Natural killer cell (primary cell): ENCODE measurements at regions of chr19 and their contacts with region 1.

Region 1: GRCh38 chr19:18521885-18522624 is at the start of gene ELL:
- DNase-seq: peak; percentile 100
- ATAC-seq: peak; percentile 85 to 96 (median 85)
- H3K4me3 ChIP-seq: peak within 1 kb of the TSS; percentile 96
- H3K4me3 Mint-ChIP-seq: peak within 1 kb of the TSS; percentile 91
- H3K27ac ChIP-seq: peak within 1 kb of the TSS; percentile 98
- H3K27ac Mint-ChIP-seq: peak within 1 kb of the TSS; percentile 92 to 98
- H3K4me1 ChIP-seq: peaks cover 36% of the 10 kb centered on the region
- H3K4me1 Mint-ChIP-seq: peaks cover 21 to 22% of the 10 kb centered on the region in 2 donors
- H3K27me3 ChIP-seq: no peaks in the 10 kb centered on the region
- H3K27me3 Mint-ChIP-seq: no peaks in the 10 kb centered on the region
- CTCF ChIP-seq: no peak
- total RNA-seq, gene ELL: 61.1 to 64.3 (median 63.8) TPM

Region 2: DNA sequence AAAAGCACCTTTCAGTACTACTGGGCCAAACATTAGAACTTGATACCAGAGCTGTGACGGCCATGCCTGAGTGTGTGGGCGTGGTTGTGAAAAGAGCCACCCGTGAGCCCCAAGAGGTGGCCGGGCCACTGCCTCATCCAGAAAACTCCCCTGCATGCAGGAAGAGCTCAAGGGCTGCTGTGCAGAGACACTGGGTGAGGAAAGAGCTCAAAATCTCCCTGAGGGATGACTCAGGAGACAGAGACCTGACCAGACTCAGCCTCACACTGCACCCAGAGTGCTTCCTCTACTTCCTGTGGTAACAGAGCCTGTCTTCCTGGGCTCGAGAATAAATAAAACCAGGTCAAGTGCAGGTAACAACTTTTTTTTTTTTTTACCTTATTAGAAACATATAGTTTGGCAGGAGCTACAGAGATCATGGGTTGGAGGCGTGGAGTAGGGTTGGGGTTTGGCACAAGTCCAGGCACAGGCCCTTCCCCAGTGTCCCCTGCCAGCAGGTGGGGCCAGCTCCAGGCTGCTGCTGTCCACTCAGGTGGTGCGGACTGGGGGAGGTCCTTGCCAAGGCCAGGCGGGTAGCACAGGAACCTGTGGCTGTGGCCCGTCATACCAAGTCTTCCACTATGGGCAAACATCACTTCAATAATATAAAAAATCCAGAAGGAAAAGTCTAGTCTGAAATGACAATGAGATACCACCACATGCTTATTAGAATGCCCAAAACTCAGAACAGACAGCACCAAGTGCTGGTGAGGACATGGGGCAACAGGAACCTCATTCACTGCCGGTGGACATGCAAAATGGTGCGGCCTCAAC is 25.7 kb before region 1 on chr19:
- intact Hi-C with region 1: loop called (anchors 1 kb)
- DNase-seq: peak; percentile 70 to 90
- ATAC-seq: peak; percentile 84 to 93 (median 88)
- H3K4me3 ChIP-seq: no peak overlapping the region
- H3K4me3 Mint-ChIP-seq: peak overlapping the region; percentile 80
- H3K27ac ChIP-seq: peak overlapping the region; percentile 93
- H3K27ac Mint-ChIP-seq: peak overlapping the region; percentile 92 to 93
- H3K4me1 ChIP-seq: peaks cover 99% of the 10 kb centered on the region
- H3K4me1 Mint-ChIP-seq: peaks cover 66 to 69% of the 10 kb centered on the region in 2 donors
- H3K27me3 ChIP-seq: no peaks in the 10 kb centered on the region
- H3K27me3 Mint-ChIP-seq: no peaks in the 10 kb centered on the region
- CTCF ChIP-seq: no peak

Region 3: GRCh38 chr19:18571564-18572300 is 49.7 kb after region 1 on chr19 and contains the start of gene UBA52:
- intact Hi-C with region 1: loop called (anchors 1 kb)
- DNase-seq: peak; percentile 99
- ATAC-seq: peak; percentile 88 to 97 (median 91)
- H3K4me3 ChIP-seq: peak within 1 kb of the TSS; percentile 62
- H3K4me3 Mint-ChIP-seq: peak within 1 kb of the TSS; percentile 98
- H3K27ac ChIP-seq: peak within 1 kb of the TSS; percentile 92
- H3K27ac Mint-ChIP-seq: peak within 1 kb of the TSS; percentile 95 to 100
- H3K4me1 ChIP-seq: peaks cover 26% of the 10 kb centered on the region
- H3K4me1 Mint-ChIP-seq: peaks cover 19 to 26% of the 10 kb centered on the region in 2 donors
- H3K27me3 ChIP-seq: no peaks in the 10 kb centered on the region
- H3K27me3 Mint-ChIP-seq: no peaks in the 10 kb centered on the region
- CTCF ChIP-seq: no peak
- total RNA-seq, gene UBA52: 1,016 to 1,271 (median 1,271) TPM

Region 4: DNA sequence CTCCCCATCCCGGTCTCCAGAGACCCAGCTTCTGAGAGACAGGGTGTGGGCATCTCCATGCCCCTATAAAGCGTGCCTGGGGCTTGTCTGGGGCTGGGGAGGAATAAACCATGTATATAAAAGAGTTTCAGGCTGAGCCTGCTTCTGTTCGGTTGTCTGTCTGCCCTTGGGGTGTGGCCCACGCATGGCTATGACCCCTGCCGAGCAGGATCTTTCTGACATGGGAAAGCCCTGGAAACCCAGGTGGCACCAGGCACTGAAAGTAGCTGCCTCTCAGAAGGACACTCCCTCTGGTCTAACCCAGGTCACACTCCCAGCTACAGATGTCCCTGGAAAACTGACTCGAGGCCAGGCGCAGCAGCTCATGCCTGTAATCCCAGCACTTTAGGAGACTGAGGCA is 98.9 kb after region 1 on chr19:
- intact Hi-C with region 1: no loop called
- DNase-seq: no peak
- ATAC-seq: no peak
- H3K4me3 ChIP-seq: no peak overlapping the region
- H3K4me3 Mint-ChIP-seq: no peak overlapping the region
- H3K27ac ChIP-seq: no peak overlapping the region
- H3K27ac Mint-ChIP-seq: no peak overlapping the region
- H3K4me1 ChIP-seq: no peaks in the 10 kb centered on the region
- H3K4me1 Mint-ChIP-seq: no peaks in the 10 kb centered on the region
- H3K27me3 ChIP-seq: peaks cover 5% of the 10 kb centered on the region
- H3K27me3 Mint-ChIP-seq: peaks cover 0 to 5% of the 10 kb centered on the region in 2 donors
- CTCF ChIP-seq: no peak

Region 5: DNA sequence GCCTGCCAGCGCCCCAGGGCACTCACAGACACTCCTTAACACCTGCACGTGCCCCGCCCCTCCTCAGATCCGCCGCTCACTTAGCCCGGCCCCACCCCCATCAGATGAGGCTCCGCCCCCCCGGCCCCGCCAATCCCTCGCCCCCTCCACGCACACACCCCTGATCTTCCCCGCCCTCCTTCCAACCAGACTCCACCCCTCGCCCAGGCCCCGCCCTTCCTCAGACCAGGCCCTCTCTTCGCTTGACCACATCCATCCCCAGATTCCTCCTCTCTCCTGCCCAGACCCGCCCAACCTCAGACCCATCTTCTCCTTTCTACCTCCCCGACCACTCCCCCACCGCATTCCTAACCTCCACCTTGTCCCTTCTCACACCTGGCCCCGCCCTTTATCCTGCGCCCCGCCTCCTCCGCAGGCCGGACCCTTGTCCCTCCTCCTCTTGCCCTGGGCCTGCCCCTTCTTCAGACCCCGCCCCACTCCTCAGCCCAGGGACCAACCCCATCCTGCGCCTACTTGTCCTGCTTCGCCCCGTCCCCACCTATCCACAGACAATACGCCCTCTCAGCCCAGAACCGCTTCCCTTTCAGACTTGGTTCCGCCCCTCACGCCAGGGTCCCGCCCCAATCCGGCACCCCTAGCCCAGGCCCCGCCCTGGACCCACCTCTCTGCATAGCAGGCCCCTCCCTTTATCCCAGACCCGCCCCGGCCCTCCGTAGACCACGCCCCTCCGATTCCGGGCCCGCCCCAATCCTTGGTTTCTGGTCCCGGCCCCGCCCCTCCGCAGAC is 114.3 kb after region 1 on chr19:
- intact Hi-C with region 1: loop called (anchors 2 kb)
- DNase-seq: peak; percentile 96 to 98
- ATAC-seq: peak; percentile 87 to 96 (median 87)
- H3K4me3 ChIP-seq: peak overlapping the region; percentile 53
- H3K4me3 Mint-ChIP-seq: peak overlapping the region; percentile 94
- H3K27ac ChIP-seq: peak overlapping the region; percentile 70
- H3K27ac Mint-ChIP-seq: peak overlapping the region; percentile 83 to 91
- H3K4me1 ChIP-seq: peaks cover 31% of the 10 kb centered on the region
- H3K4me1 Mint-ChIP-seq: peaks cover 22 to 32% of the 10 kb centered on the region in 2 donors
- H3K27me3 ChIP-seq: no peaks in the 10 kb centered on the region
- H3K27me3 Mint-ChIP-seq: peaks cover 0 to 3% of the 10 kb centered on the region in 2 donors
- CTCF ChIP-seq: no peak

Region 6: DNA sequence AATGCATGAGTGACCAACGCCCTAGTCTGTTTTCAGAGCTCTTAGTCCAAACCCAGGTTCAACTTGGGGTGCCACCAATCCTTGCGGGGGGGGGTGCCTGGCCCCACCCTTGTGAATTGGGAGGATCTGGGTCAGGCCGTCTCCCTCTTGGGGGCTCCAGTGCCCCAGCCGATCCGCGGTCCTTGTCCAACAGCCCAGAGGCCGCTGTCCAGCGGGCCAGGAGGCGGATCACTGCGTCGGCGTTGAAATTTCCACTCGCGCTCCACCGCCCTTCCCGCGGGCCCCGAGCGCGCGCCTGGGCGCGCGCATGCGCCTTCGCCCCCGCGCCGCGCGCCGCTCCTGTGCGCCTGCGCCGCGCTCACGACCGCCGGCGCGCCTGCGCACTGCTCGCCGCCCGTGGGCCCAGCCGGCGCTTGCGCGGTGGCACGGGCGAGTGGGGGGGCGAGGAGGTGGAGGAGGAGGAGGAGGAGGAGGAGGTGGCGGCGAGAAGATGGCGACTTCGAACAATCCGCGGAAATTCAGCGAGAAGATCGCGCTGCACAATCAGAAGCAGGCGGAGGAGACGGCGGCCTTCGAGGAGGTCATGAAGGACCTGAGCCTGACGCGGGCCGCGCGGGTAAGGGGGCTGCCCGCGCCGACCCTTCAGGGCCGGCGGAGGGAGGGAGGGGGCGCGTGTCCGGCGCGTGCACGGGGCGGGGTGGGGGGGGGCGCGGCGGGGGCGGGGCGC is 161.3 kb after region 1 on chr19 and contains the start of gene CRTC1:
- intact Hi-C with region 1: no loop called
- DNase-seq: peak; percentile 93 to 97
- ATAC-seq: peak; percentile 89 to 92 (median 91)
- H3K4me3 ChIP-seq: peak within 1 kb of the TSS; percentile 69
- H3K4me3 Mint-ChIP-seq: peak within 1 kb of the TSS; percentile 88
- H3K27ac ChIP-seq: peak within 1 kb of the TSS; percentile 68
- H3K27ac Mint-ChIP-seq: peak within 1 kb of the TSS; percentile 74 to 82
- H3K4me1 ChIP-seq: peaks cover 23% of the 10 kb centered on the region
- H3K4me1 Mint-ChIP-seq: peaks cover 0 to 5% of the 10 kb centered on the region in 2 donors
- H3K27me3 ChIP-seq: no peaks in the 10 kb centered on the region
- H3K27me3 Mint-ChIP-seq: no peaks in the 10 kb centered on the region
- CTCF ChIP-seq: no peak
- total RNA-seq, gene CRTC1: 14.1 to 17.0 (median 14.3) TPM